Activated CD4-positive, alpha-beta memory T cell treated with anti-CD3 and anti-CD28 coated beads for 36 hours (primary cell): ENCODE measurements at regions of chr11 and their contacts with region 1.

Region 1: DNA sequence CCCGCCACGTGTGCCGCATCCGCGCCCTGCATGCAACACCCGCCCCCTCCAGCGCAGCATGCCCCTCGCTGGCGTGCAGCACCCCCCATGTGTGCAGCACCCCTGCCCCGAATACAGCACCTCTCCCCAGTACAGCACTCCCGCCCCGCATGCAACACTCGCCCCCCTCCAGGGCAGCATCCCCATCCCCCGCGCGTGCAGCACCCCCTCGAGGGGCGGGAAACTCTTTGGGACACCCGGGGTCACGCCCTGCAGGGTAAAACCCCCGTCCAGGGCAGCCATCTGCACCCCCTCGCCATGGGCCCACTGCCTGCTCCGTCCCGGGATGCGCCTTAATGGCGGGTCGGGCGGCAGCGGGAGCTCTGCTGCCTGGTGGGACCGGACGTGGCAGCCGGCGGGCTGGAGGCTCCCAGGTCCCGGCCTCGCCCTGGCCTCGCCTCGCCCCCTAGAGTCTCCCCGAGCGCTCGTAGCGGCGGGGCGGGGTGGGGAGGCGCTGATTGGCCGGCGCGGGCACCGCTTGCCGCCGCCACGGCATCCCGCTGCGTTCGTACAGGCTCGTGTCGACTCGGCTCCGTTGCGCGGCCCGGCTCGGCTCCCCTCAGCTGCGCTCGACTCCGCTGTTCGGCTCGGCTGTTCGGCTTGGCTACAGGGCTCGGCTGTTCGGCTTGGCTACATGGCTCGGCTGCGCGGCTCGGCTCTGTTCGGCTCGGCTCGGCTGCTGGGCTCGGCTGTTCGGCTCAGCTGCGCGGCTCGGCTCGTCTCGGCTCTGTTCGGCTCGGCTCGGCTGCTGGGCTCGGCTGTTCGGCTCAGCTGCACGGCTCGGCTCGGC is 417 bp upstream of the BRSK2 start:
- DNase-seq: peak; percentile 97
- H3K4me3 Mint-ChIP-seq: peak overlapping the region; percentile 61
- H3K27ac Mint-ChIP-seq: no peak overlapping the region
- H3K4me1 Mint-ChIP-seq: peaks cover 6% of the 10 kb centered on the region
- H3K27me3 Mint-ChIP-seq: peaks cover 26% of the 10 kb centered on the region

Region 2: GRCh38 chr11:1202776-1203504 is 186.4 kb before region 1 on chr11:
- CTCF ChIA-PET with region 1: no interaction called
- POLR2A ChIA-PET with region 1: no interaction called
- intact Hi-C with region 1: loop called (anchors 10 kb)
- DNase-seq: peak; percentile 73
- H3K4me3 Mint-ChIP-seq: no peak overlapping the region
- H3K27ac Mint-ChIP-seq: no peak overlapping the region
- H3K4me1 Mint-ChIP-seq: no peaks in the 10 kb centered on the region
- H3K27me3 Mint-ChIP-seq: no peaks in the 10 kb centered on the region

Region 3: DNA sequence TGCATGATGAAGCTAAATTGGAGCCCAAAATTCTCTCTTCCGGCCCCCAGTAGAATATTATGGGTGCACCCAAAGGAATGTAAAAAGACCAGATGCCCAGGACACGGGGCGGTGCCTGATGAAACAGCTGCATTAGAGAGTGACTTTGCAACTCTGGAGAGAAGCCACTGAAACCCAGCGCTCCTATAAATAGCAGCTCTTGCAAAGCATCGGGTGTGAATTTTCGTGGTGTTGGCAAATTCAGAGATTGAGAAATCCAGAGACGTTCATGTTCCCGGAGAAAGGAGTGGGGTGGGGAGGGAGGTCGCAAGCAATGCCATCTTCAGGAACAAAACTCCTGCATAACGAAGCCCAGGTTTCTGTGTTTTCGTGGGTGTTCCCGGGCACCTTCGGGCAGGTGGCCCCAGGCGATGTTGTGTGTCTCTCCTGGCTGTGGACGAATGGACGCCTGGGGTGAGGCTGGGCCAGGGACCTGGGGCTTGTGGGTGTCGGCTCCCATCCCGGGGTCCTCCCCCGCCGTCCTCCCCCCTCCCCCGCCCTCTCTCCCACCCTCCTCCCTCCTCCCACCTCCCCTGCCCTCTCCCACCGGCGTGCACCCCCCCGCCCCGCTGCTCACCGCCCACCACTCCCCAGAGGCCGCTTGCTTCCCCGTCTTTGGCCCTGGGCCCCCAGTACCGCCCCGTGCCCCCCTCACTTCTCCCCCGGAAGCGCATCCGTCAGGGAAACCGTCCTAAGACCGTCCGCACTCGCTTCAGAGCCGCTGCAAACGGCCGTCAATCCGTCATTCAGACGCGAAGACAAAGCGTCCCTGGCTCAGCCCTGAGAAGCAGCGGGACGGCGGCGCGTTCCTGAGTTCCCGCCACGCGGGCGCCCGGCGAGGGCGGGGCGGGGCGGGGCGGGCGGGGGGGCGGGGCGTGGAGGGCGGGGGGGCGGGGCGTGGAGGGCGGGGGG is 53.2 kb before region 1 on chr11:
- CTCF ChIA-PET with region 1: no interaction called
- POLR2A ChIA-PET with region 1: no interaction called
- intact Hi-C with region 1: loop called (anchors 2 kb)
- DNase-seq: peak; percentile 69
- H3K4me3 Mint-ChIP-seq: peak overlapping the region; percentile 71
- H3K27ac Mint-ChIP-seq: peak overlapping the region; percentile 66
- H3K4me1 Mint-ChIP-seq: peaks cover 9% of the 10 kb centered on the region
- H3K27me3 Mint-ChIP-seq: peaks cover 2% of the 10 kb centered on the region